PC-3 (cell line): ENCODE measurements at regions of chr20 and their contacts with region 1.

Region 1: DNA sequence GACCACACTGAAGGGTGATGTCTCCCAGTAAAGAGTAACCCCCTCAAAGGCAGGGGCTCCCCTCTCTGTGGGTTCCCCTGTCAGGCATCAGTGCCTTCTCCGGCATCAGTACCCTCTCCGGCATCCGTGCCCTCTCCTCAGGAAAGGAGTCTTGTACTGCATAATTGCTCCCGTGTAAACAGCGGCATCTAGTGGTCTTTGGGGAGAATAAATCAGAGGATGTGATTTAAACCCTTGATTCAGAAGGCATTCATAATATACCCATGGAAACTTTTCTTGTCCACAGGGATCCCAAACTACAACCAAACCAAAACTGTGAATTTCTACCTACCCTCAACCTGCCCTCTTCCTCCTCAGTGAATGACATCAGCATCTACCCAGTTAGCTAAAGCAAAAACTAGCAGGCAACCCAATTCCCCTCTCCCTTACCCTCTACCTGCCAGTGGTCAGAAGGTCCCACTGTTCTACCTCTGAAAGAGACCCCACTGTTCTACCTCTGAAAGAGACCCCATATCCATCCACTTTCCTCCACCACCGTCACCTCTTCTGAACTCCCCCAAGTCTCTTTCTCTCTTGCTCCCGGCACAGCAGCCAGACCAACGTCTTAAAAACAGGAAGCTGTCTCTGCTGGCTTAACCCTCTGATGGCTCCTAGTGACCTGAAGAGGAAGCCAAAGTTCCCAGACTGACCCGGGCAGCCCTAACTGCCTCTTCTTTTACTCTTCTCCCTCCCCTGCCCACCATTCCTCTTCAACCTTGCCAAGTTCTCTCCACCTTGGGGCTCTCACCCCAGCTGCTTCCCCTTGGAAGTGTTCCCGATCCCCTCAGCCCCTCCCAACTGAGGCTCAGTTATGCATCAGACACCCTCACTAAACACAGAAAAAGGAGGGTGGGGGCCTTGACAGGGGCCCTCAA is 27.2 kb downstream of the UBE2V1 start:
- DNase-seq: peak; percentile 75
- ATAC-seq: peak; percentile 68
- H3K4me3 ChIP-seq: no peak overlapping the region
- H3K27ac ChIP-seq: peak overlapping the region; percentile 18
- H3K4me1 ChIP-seq: peaks cover 27% of the 10 kb centered on the region
- H3K27me3 ChIP-seq: no peaks in the 10 kb centered on the region
- CTCF ChIP-seq: peak; percentile 98

Region 2: DNA sequence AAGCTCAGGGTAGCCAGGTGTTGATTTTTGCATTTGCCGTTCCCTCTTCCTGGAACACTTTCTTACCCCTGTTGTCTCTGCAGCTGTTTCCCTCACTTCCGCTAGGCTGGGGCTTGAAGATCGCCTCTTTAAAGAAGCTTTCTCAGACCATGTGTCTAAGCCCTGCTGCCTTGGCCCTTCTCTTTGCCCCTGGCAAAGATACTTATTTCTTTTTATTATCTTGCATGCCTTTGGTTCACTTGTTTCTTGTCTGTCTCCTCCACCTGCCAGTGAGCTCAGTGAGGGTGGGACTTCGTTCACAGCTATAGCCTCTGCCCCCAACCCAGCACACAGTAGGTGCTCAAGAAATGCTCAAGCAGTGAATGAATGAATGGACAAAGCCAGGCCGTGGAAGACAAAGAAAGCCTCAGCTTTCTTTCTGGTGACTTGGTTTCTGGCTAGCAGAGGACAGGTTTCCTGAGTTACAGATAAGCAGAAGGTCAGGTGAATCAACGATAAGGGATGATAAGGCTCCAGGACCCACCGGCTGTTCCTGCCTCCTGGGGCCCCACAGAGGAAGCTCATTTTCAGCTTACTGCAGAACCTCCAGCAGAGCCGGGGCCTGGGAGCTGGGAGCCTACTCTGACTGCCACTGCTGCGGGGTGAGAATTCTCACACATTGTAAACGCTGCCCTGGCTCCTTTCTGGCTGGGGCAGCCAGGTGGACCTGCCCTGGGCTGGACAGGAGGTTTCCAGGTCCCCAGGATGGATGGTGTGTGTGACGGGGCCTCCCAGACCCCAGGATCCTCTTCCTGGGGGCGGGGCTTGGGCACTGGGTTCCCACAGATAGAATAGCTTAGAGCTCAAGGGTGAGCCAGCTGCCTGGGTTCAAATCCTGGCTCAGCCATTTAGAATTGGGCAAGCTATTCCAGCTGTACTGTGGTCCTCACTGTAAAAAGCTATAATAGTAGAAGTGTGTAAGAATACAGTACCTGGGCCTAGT is 73.1 kb before region 1 on chr20:
- CTCF ChIA-PET with region 1: no interaction called
- POLR2A ChIA-PET with region 1: no interaction called
- intact Hi-C with region 1: no loop called
- DNase-seq: no peak
- ATAC-seq: no peak
- H3K4me3 ChIP-seq: no peak overlapping the region
- H3K27ac ChIP-seq: no peak overlapping the region
- H3K4me1 ChIP-seq: no peaks in the 10 kb centered on the region
- H3K27me3 ChIP-seq: no peaks in the 10 kb centered on the region
- CTCF ChIP-seq: no peak

Region 3: GRCh38 chr20:50115591-50116372 is 30.1 kb after region 1 on chr20:
- CTCF ChIA-PET with region 1: interaction called, 4 read pairs
- POLR2A ChIA-PET with region 1: no interaction called
- intact Hi-C with region 1: loop called (anchors 2 kb)
- DNase-seq: peak; percentile 100
- ATAC-seq: peak; percentile 73
- H3K4me3 ChIP-seq: peak overlapping the region; percentile 74
- H3K27ac ChIP-seq: no peak overlapping the region
- H3K4me1 ChIP-seq: peaks cover 31% of the 10 kb centered on the region
- H3K27me3 ChIP-seq: no peaks in the 10 kb centered on the region
- CTCF ChIP-seq: no peak

Region 4: GRCh38 chr20:50153485-50154377 is 68.0 kb after region 1 on chr20 and contains the start of gene PEDS1:
- CTCF ChIA-PET with region 1: no interaction called
- POLR2A ChIA-PET with region 1: no interaction called
- intact Hi-C with region 1: no loop called
- DNase-seq: peak; percentile 98
- ATAC-seq: peak; percentile 93
- H3K4me3 ChIP-seq: peak within 1 kb of the TSS; percentile 76
- H3K27ac ChIP-seq: peak within 1 kb of the TSS; percentile 31
- H3K4me1 ChIP-seq: peaks cover 38% of the 10 kb centered on the region
- H3K27me3 ChIP-seq: no peaks in the 10 kb centered on the region
- CTCF ChIP-seq: no peak
- total RNA-seq, gene PEDS1: 53.8 and 59.1 TPM in 2 replicates